Endothelial cell of umbilical vein (primary cell): ENCODE measurements at regions of chr2 and their contacts with region 1.

Region 1: GRCh38 chr2:42974721-42975717 is 182.6 kb upstream of the HAAO start:
- DNase-seq: peak; percentile 66
- H3K4me3 ChIP-seq: peak overlapping the region in 2 of 3 experiments; percentile 21 to 44
- H3K27ac ChIP-seq: no peak overlapping the region
- H3K4me1 ChIP-seq: peaks cover 4% of the 10 kb centered on the region
- H3K27me3 ChIP-seq: no peaks in the 10 kb centered on the region
- CTCF ChIP-seq: peak; percentile 81 to 95
- POLR2A ChIP-seq: no peak

Region 2: DNA sequence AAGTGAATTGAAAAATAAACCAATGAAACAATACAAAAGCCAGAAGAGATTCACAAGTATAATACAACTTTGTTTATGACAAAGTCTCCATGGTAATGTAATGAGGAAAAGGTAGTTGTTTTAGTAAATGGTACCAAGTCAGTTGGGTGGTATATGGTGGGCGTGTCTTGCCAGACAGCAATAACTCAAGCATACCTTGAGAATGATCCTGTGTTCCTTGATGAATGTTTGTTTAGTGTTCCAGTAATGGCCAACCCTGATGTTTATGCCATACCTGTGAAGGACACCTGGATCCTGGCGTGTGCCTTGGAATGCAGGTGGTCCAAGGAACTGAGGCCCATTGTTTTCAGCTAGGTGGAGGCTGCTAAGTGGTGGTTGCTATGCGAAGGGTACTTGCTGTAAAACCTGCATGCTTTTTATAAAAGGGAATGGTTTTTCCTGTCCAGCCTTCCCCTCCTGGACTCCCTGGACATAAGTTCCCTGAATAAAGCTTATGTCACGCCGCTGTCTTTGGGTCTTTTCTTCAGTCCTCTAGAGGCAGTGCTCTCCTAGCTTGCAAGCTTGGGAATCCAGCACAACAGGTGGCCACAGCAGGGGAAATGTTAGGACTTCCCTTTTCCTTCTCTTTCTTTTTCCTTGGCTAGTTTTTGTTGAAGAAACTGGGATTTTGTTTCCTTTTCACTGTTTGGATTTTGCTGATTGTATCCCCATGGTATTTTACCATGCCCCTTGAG is 351.9 kb before region 1 on chr2:
- CTCF ChIA-PET with region 1: no interaction called
- POLR2A ChIA-PET with region 1: no interaction called
- dilution Hi-C with region 1: no loop called
- intact Hi-C with region 1: no loop called
- DNase-seq: peak; percentile 4
- H3K4me3 ChIP-seq: no peak overlapping the region
- H3K27ac ChIP-seq: no peak overlapping the region
- H3K4me1 ChIP-seq: peaks cover 17% of the 10 kb centered on the region
- H3K27me3 ChIP-seq: no peaks in the 10 kb centered on the region
- CTCF ChIP-seq: no peak
- POLR2A ChIP-seq: no peak

Region 3: DNA sequence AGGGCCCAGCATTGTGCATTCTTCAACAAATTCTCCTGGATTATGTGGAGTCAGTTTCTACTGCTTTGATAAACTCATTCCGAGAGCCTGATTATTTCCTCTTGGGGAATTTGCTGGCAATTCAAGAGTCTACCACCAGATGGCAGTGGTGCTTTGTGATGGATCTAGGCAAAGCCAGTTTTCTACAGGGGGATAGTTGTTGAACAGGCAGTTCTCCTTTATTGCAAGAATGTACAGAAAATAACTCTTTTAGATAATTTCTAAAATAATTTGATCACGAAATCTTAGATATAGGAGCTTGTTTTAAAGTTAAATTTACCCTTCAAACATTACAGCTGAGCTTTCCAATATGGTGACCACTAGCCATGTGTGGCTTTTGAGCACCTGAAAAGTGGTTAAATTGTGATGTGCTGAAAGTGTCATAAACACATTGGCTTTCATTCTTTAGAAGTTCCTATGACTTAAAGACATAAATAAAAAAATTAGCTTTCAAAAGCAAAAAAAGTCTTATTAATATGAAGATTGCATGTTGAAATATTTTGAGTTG is 115.9 kb before region 1 on chr2:
- CTCF ChIA-PET with region 1: interaction called, 6 read pairs
- POLR2A ChIA-PET with region 1: no interaction called
- dilution Hi-C with region 1: no loop called
- intact Hi-C with region 1: loop called (anchors 1 kb)
- DNase-seq: peak; percentile 90
- H3K4me3 ChIP-seq: no peak overlapping the region
- H3K27ac ChIP-seq: no peak overlapping the region
- H3K4me1 ChIP-seq: peaks cover 19% of the 10 kb centered on the region
- H3K27me3 ChIP-seq: no peaks in the 10 kb centered on the region
- CTCF ChIP-seq: peak; percentile 75 to 78
- POLR2A ChIP-seq: no peak

Region 4: GRCh38 chr2:42954227-42954962 is 20.6 kb before region 1 on chr2:
- CTCF ChIA-PET with region 1: interaction called, 3 read pairs
- POLR2A ChIA-PET with region 1: no interaction called
- dilution Hi-C with region 1: no loop called
- intact Hi-C with region 1: loop called (anchors 1 kb)
- DNase-seq: no peak
- H3K4me3 ChIP-seq: no peak overlapping the region
- H3K27ac ChIP-seq: peak overlapping the region; percentile 65
- H3K4me1 ChIP-seq: peaks cover 30% of the 10 kb centered on the region
- H3K27me3 ChIP-seq: no peaks in the 10 kb centered on the region
- CTCF ChIP-seq: no peak
- POLR2A ChIP-seq: no peak

Region 5: DNA sequence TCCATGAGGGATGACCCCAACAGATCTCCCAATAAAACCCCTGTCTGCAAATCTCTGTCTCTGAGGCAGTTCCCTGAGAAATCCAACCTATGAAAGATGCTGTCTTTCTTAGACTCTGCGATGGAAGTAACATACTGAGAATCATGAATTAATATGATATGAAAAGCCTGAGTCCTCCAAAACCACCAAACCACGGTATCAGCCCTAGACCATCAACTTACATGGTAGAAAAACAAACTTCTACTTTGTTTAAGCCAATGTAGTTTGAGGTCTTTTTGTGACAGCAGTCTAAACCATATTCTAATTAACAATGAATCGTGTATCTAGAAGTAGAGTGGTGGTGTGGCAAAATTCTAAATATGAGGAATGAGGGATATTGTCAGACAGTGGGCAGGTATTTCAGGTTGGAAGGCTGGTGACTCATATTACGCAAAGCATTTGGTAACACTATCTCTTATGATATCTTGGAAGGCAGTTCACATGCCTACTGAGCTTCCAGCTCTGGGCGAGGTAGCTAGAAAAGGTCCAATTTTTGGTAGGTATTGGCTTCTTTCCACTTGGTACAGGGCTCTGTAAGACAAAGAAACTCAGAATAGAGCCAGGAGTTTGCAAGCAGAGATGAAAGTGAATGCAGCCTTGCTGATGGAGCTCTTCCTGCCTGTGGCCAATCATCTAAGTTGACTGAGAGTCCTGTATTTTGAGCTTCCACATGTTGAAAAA is 35.6 kb after region 1 on chr2:
- CTCF ChIA-PET with region 1: no interaction called
- POLR2A ChIA-PET with region 1: no interaction called
- dilution Hi-C with region 1: no loop called
- intact Hi-C with region 1: no loop called
- DNase-seq: no peak
- H3K4me3 ChIP-seq: no peak overlapping the region
- H3K27ac ChIP-seq: no peak overlapping the region
- H3K4me1 ChIP-seq: no peaks in the 10 kb centered on the region
- H3K27me3 ChIP-seq: peaks cover 6 to 7% of the 10 kb centered on the region in 2 experiments
- CTCF ChIP-seq: no peak
- POLR2A ChIP-seq: no peak

Region 6: DNA sequence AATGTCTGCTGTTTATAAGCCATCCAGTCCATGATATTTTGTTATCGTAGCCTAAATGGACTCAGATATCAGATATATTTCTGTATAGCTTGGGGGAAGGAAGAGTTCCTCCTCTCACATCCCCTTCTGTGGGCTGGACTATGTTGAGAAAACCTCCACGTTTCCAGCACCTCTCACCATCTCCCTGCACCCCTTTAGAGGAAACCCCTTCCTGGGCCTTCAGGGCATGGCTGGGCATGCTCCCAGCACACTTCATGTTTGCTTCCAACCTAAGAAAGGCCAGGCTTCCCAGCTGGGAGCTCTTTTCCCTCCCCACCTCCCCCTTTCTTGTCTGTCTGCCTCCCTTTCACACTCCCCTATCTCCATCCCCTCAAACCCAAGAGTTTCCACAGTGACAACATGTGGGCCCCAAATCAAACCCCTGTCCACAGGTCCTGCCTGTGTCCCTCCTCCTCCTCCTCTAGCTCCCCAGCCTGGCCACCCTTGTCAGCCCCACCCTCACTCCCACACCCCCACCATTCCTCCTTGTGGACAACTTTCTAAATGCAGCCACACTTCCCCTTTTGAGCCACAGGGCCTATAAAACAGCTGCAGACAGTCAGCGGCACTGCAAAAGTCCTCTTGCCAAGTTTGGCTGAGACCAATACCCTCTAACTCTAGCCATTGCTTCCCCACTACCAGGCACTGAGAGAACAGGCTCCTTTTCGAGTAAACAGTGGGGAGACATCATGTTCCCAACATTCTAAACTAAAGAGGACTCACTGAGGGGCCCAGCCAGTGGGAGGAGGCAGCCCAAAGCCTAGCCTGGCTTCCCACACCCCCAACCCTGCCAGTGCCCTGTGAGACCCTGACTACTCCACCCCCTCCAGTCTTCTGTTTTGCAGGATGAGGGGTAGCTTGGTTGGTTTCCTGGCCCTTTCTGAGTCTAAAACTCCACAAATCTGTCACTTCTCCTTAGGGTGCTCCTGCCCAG is 130.9 kb after region 1 on chr2:
- CTCF ChIA-PET with region 1: interaction called, 3 read pairs
- POLR2A ChIA-PET with region 1: no interaction called
- dilution Hi-C with region 1: no loop called
- intact Hi-C with region 1: loop called (anchors 5 kb)
- DNase-seq: no peak
- H3K4me3 ChIP-seq: no peak overlapping the region
- H3K27ac ChIP-seq: no peak overlapping the region
- H3K4me1 ChIP-seq: peaks cover 4% of the 10 kb centered on the region
- H3K27me3 ChIP-seq: no peaks in the 10 kb centered on the region
- CTCF ChIP-seq: peak in 1 of 2 donors; percentile 38
- POLR2A ChIP-seq: no peak

Region 7: DNA sequence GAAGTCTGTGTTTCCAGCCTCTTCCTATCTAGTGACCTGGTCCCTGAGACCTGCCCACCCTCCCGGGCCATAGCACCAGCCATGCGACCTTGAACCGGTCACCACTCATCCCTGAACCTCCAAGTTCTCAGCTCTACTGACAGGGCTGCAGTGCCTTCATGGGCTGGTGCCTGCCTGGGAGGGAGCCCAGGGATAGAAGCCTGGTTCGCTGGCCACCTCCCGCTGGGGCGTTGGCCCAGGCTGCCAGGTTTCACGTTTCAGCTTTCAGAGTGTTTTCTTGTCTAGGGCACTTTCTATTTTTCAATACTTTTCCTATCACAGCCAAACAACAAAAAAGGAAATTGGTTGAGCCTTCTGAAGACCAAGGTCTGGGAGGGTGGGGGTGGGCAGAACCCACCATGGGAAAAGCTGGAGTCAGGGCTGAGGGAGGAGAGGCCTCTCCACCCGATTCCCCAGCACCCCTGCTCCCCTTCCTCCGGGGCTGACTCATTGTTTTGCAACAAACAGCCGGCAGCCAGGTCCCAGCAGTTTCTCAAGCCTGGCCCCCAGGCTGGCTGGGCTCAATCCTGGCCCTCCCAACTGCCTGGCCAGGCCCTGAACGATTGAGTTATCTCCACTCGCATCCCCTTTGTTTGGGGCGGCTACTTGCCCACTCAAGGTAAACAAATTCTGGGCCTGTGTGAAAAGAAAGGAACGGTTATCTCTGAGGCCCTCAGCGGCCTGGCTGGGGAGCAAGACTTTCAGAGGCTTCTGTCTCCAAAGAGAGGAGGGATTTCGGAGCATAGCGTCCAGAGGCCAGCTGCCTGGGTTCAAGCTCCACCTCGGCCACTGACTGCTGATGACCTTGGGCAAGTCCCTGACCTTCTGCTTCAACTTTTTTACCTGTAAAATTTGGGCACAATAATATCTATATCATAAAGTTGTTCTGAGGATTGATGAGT is 203.9 kb after region 1 on chr2:
- CTCF ChIA-PET with region 1: interaction called, 4 read pairs
- POLR2A ChIA-PET with region 1: no interaction called
- dilution Hi-C with region 1: no loop called
- intact Hi-C with region 1: loop called (anchors 2 kb)
- DNase-seq: peak; percentile 97
- H3K4me3 ChIP-seq: no peak overlapping the region
- H3K27ac ChIP-seq: peak overlapping the region; percentile 92
- H3K4me1 ChIP-seq: peaks cover 46% of the 10 kb centered on the region
- H3K27me3 ChIP-seq: no peaks in the 10 kb centered on the region
- CTCF ChIP-seq: no peak
- POLR2A ChIP-seq: no peak

Region 8: GRCh38 chr2:43312755-43313641 is 338.0 kb after region 1 on chr2:
- CTCF ChIA-PET with region 1: no interaction called
- POLR2A ChIA-PET with region 1: no interaction called
- dilution Hi-C with region 1: no loop called
- intact Hi-C with region 1: no loop called
- DNase-seq: peak; percentile 58
- H3K4me3 ChIP-seq: no peak overlapping the region
- H3K27ac ChIP-seq: no peak overlapping the region
- H3K4me1 ChIP-seq: peaks cover 13% of the 10 kb centered on the region
- H3K27me3 ChIP-seq: no peaks in the 10 kb centered on the region
- CTCF ChIP-seq: no peak
- POLR2A ChIP-seq: no peak

Region 9: DNA sequence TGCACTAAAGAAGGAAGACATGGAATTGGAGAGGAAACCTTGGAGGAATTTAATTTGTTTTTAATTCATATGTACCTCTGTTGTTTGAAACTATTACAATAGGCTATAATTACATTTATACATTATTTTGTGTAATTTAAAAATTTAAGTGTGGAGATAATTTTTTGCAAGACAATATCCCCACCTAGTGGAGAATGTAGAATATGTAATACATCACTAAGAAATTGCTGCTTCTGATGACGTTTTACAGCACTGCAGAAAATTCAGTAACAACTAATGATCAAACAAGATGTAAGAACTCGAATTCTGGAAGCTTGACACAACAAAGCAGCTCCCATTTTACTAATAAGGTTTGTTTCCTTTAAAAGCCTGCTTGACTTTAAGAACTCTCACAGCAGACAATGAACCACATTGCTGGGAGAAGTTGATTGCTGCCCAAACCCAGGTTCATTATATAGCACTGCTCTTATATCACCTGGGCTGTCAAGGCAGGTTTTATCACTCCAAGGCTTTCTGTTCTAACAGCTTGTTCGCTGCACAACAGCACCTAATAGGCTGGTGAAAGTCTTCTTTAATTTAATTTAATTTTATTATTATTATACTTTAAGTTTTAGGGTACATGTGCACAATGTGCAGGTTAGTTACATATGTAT is 567.4 kb after region 1 on chr2:
- CTCF ChIA-PET with region 1: interaction called, 3 read pairs
- POLR2A ChIA-PET with region 1: no interaction called
- dilution Hi-C with region 1: no loop called
- intact Hi-C with region 1: loop called (anchors 5 kb)
- DNase-seq: peak; percentile 66
- H3K4me3 ChIP-seq: no peak overlapping the region
- H3K27ac ChIP-seq: no peak overlapping the region
- H3K4me1 ChIP-seq: no peaks in the 10 kb centered on the region
- H3K27me3 ChIP-seq: no peaks in the 10 kb centered on the region
- CTCF ChIP-seq: peak in 1 of 2 donors; percentile 17
- POLR2A ChIP-seq: no peak